Uterus (tissue), 4 donors: ENCODE measurements at regions of chr14 and their contacts with region 1.

Region 1: DNA sequence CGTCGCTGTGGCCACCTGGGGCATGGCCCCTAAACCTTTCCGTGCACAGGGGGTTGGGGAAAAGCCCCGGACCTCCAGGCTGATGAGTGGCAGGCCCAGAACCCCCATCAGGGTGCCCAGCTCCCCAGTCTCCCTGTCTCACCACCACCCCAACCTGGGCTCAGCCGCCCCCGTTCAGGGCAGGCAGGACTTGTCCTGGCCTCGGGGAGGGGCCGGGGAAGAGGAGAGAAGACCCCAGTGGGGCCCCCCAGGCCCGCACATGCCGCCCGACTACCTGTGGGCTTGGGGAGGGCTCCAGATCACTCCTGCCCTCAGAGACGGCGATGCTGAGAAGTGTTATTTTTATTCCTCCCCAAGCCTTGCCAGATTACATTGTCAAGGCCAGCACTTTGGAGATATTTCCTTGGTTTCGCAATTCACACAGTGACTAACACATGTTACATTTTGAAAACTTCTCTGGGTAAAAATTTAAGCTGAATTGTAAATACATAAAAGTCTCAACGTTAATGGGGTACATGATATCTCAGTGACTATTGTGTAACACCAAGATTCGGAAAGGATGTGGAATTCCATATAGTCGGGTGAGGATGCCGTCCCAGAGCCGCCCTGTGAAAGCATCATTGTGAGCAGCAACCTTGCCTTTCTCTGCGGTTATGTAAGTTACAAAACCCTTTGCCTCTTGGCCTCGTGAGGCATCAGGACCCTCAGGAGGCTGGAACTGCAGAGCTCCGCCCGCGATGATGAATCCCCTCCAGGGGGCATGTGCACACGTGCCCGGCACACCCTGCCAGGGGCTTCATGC is 85.6 kb upstream of the DIO3 start:
- DNase-seq: peak; percentile 59 to 72
- H3K4me3 ChIP-seq: peak overlapping the region in 1 of 2 donors; percentile 8
- H3K27ac ChIP-seq: peak overlapping the region; percentile 78 to 87
- H3K4me1 ChIP-seq: peaks cover 13 to 14% of the 10 kb centered on the region in 2 donors
- H3K27me3 ChIP-seq: no peaks in the 10 kb centered on the region
- CTCF ChIP-seq: no peak
- POLR2A ChIP-seq: no peak

Region 2: DNA sequence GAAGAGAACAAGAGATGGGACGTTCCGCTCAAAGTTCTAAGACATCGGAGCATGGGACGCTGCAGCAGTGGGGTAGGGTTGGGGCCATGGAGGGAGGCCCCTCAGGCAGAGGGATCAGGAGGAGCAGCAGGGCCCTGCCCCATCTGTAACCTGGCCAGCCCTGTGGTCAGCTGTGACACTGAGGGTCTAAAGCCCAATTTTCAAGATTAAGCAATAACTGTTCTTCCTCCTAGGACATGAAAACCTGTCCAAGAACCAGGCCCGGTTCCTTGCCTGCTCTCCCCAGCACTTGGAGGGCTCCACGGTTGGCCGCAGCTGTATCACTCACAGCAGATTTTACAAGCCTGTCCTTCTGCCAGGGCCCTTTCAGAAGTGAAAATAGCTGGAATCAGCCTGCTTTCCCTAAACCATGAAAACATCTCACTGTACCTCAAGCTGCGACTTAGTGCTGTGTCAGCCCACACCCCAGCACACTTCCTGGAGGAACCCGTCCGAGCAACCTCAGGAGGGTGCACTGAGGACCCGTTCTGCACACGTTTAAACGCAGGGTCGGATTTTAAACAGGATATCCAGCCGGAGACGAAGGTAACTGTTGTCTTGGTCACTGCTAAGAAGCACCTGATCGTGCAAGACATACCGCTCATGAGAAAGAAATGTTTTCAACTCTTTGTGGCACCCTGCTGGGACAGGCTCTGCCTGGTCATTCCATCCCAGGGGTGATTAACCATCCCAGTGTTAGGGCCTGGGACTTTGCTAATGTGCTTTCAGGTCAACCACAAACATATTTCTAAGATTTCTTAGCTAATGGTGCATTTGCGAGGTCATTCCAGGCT is 116.2 kb before region 1 on chr14:
- intact Hi-C with region 1: loop called (anchors 10 kb)
- DNase-seq: peak; percentile 86 to 90
- H3K4me3 ChIP-seq: peak overlapping the region in 1 of 2 donors; percentile 15
- H3K27ac ChIP-seq: peak overlapping the region; percentile 94 to 95
- H3K4me1 ChIP-seq: peaks cover 26 to 28% of the 10 kb centered on the region in 2 donors
- H3K27me3 ChIP-seq: no peaks in the 10 kb centered on the region
- CTCF ChIP-seq: no peak
- POLR2A ChIP-seq: no peak

Region 3: DNA sequence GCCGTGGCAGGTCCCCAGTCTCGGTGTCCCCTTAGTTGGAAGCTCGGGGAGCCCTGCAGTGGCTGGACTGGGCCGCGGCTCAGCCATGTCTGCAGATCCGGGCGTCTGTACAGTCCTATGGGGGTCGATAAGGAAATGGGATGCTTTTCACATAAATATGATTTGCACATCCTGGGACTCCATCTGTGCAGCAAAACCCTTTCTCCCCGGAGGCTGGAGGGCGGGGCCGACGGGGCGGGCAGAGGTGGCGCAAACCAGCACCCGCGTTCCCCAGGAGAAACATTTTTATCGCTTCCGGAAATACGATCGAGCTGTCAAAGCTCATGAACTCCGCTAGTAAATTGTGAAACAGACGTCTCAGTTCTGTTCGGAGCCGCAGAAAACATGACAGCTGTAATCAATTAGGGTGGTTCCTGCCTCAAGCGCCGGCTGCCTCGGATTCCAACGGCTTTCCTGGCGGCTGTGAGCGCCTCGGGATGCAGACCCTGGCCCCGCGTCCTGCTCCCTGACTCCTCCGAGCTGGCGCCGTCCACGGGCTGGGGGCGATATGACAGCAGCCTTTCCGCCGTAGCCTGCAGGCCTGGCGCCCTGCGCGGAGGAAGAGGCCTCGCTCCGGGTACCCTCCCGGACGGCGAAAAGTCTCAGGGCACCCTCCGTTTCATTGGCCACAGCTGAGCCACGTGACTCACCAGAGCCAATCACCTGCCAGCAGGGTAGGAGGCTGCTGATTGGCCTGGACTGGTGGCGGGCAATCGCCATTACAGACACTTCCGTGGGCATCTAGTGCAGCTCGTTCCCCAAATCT is 108.6 kb after region 1 on chr14:
- intact Hi-C with region 1: no loop called
- DNase-seq: peak; percentile 59 to 76
- H3K4me3 ChIP-seq: peak overlapping the region in 1 of 2 donors; percentile 18
- H3K27ac ChIP-seq: peak overlapping the region in 1 of 2 donors; percentile 57
- H3K4me1 ChIP-seq: no peaks in the 10 kb centered on the region
- H3K27me3 ChIP-seq: no peaks in the 10 kb centered on the region
- CTCF ChIP-seq: no peak
- POLR2A ChIP-seq: no peak